ENCODE measurements at regions of chr2 and their contacts with region 1.

Region 1: DNA sequence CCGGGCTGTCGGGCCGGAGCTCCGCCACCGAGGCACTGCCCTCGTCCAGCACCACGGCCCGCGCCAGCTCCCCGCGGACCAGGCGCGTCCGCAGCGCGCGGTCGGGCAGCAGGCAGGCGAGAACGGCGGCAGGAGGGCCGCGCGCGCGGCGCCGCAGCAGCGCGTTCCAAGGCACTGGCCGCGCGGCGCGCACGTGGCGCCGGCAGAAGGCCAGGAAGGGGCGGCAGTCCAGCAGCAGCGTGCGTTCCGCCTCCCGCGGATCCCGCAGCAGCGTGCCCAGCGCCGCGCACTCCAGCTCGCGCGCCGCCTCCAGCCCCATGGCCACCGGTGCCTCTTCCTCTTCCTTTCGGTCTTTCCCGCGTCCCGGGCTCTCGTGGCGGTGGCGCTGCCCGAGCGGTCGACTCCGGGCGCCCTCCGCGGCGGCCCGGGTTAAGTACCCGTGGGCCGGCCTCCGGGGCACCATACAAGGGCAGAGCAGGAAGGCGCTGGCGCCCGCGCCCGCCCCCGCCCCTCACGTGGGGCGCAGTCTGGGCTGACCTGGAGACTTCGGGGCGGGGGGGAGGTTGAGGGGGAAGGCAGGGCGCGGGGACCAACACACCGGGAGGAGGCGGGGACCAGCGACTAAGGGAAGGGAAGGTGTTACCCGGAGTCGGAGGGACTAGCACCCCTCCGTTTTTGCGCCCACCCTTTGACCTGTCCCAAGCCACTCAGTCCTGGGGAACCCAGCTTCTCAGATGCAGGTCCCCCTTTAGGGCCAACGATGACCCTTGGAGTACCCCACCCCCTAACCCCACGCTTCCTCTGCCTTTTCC is at the start of gene DUSP2:
- DNase-seq: peak; percentile 83
- H3K4me3 Mint-ChIP-seq: peak within 1 kb of the TSS; percentile 95
- H3K27ac Mint-ChIP-seq: peak within 1 kb of the TSS; percentile 97
- H3K4me1 Mint-ChIP-seq: peaks cover 49% of the 10 kb centered on the region
- H3K27me3 Mint-ChIP-seq: no peaks in the 10 kb centered on the region
- total RNA-seq, gene DUSP2: 238 and 260 TPM in 2 replicates

Region 2: DNA sequence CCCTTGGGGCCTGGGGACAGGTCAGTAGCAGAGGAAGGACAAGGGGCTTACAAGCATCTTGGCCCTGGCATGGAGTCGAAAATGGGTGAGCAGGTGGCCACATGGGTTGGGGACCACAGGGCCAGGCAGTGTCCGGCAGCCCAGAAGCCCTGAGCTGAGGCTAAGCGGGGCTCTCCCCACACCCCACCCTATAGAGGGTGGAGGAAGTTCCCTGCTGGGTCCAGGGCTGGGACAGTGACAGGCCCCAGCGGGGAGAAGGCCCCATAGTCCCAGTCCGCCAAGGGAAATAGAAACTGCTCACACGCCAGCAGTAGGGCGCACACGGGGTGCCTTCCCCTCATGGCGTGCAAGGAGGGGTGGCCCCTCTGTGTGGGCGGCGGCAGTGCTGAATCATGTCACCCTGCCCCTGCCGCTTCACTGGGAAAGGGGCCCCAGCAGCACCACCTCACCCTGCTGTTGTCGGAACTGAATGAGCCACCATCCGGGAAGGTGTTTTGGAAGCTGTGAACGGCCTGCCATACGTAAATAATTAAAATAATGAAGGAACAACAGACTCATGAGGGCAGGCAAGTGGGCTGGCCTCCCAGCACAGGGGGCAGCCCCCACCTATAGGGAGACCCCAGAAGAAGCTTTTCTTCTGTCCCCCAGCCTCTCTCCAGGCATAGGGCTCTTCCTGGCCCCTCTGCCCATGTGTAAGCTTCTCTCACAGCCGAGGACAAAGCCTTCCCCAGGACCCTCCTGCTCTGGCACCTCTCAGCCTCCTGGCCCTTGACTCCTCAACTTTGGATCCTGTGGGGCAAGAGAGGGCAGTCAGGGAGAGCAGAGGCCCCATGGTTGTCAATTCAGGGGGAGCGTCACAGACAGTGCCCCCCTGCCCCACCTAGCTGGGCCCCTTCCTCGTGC is 12.7 kb after region 1 on chr2:
- intact Hi-C with region 1: loop called (anchors 1 kb)
- DNase-seq: peak; percentile 68
- H3K4me3 Mint-ChIP-seq: peak overlapping the region; percentile 60
- H3K27ac Mint-ChIP-seq: peak overlapping the region; percentile 93
- H3K4me1 Mint-ChIP-seq: peaks cover 65% of the 10 kb centered on the region
- H3K27me3 Mint-ChIP-seq: no peaks in the 10 kb centered on the region

Region 3: GRCh38 chr2:96186562-96186961 is 41.3 kb after region 1 on chr2:
- intact Hi-C with region 1: no loop called
- DNase-seq: no peak
- H3K4me3 Mint-ChIP-seq: no peak overlapping the region
- H3K27ac Mint-ChIP-seq: no peak overlapping the region
- H3K4me1 Mint-ChIP-seq: peaks cover 2% of the 10 kb centered on the region
- H3K27me3 Mint-ChIP-seq: no peaks in the 10 kb centered on the region

Region 4: GRCh38 chr2:96208143-96209010 is 63.1 kb after region 1 on chr2 and contains the start of gene STARD7:
- intact Hi-C with region 1: loop called (anchors 1 kb)
- DNase-seq: peak; percentile 98
- H3K4me3 Mint-ChIP-seq: peak within 1 kb of the TSS; percentile 97
- H3K27ac Mint-ChIP-seq: peak within 1 kb of the TSS; percentile 87
- H3K4me1 Mint-ChIP-seq: peaks cover 45% of the 10 kb centered on the region
- H3K27me3 Mint-ChIP-seq: no peaks in the 10 kb centered on the region
- total RNA-seq, gene STARD7: 201 and 206 TPM in 2 replicates

Region 5: DNA sequence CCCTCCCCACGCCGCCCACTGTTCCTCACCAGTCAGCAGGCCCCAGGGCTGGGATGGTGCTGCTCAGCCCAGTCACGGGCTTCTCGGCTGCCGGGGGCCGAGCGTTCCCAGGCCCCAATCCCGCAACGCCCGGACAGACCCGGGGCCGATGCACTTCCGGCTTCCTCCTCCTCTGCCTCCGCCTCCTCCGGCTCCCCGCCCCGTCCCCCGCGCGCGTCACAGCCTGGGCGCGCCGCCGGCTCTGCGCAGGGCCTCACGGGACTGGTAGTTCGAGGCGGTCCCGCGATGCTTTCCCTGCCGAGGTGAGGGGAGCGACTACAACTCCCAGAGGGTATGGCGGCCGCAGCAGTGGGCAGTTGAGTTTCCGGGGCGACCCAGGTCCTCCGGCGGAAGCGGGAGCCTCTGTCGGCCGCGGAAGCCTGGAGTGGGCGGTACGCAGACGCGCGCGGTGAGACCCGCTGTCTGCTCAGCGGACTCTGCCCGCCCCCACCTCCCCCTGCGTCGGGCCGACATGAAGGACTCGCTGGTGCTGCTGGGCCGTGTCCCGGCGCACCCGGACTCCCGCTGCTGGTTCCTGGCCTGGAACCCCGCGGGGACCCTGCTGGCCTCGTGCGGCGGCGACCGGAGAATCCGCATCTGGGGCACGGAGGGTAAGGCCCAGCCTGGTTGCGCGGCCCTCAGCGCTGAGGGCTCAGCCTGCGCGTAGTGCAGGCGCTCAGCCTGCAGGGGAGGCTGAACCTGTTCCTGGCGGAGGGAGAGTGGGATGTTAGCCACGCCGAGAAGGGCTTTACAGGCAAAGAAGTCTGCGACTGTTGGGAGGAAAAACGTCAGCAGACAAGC is 120.8 kb after region 1 on chr2 and contains the starts of genes CIAO1 and TMEM127:
- intact Hi-C with region 1: loop called (anchors 1 kb)
- DNase-seq: peak; percentile 99
- H3K4me3 Mint-ChIP-seq: peak within 1 kb of the TSS; percentile 100
- H3K27ac Mint-ChIP-seq: peak within 1 kb of the TSS; percentile 98
- H3K4me1 Mint-ChIP-seq: peaks cover 32% of the 10 kb centered on the region
- H3K27me3 Mint-ChIP-seq: no peaks in the 10 kb centered on the region
- total RNA-seq, gene CIAO1: 93.9 and 94.7 TPM in 2 replicates
- total RNA-seq, gene TMEM127: 29.0 and 30.4 TPM in 2 replicates

Region 6: GRCh38 chr2:97663965-97664635 is 1518.9 kb after region 1 on chr2 and contains the start of gene ACTR1B:
- intact Hi-C with region 1: loop called (anchors 5 kb)
- DNase-seq: peak; percentile 98
- H3K4me3 Mint-ChIP-seq: peak within 1 kb of the TSS; percentile 92
- H3K27ac Mint-ChIP-seq: peak within 1 kb of the TSS; percentile 98
- H3K4me1 Mint-ChIP-seq: peaks cover 30% of the 10 kb centered on the region
- H3K27me3 Mint-ChIP-seq: no peaks in the 10 kb centered on the region
- total RNA-seq, gene ACTR1B: 142 and 147 TPM in 2 replicates

Measured in activated T-helper 2 cell treated with anti-CD3 and anti-CD28 coated beads, Interferon-gamma antibody, Interleukin-2, Interleukin-4, amounts not matched to agents 10 μg/mL and 5 μg/mL and 100 μg/mL, durations not matched to agents 14 hours and 24 hours and 36 hours (primary cell).